Transverse colon (tissue), 4 donors: ENCODE measurements at regions of chr4 and their contacts with region 1.

Region 1: DNA sequence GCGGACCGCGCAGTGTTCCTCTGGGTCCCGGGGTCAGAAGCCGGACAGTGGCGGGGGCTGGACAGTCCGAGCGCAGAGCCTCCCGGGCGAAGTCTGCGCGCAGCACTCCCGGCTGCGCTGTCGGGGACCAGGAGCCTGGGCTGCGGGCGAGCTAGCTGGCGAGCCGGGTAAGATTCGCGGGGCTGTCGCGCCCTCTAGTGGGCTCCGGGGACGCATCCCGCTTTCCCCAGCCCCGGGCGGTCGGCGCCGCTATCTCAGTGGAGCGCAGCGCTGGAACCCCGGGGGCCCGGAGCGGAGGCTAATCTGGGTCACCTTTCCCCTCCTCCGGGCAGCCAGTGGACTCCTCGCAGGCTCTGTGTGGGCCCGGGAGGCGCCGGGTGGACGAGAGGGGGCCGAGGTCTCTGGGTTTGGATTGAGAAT is 4.2 kb downstream of the PDGFRA start:
- DNase-seq: peak; percentile 81
- H3K4me3 ChIP-seq: peak overlapping the region; percentile 19 to 56 (median 37)
- H3K27ac ChIP-seq: peak overlapping the region; percentile 55 to 79 (median 69)
- H3K4me1 ChIP-seq: peaks cover 4 to 48% (median 29%) of the 10 kb centered on the region in 4 donors
- H3K27me3 ChIP-seq: peaks cover 76% of the 10 kb centered on the region
- CTCF ChIP-seq: peak; percentile 63 to 84 (median 72)
- EP300 ChIP-seq: no peak
- POLR2A ChIP-seq: no peak

Region 2: GRCh38 chr4:53196882-53197771 is 1036.2 kb before region 1 on chr4:
- in situ Hi-C with region 1: loop called in 2 of 4 experiments (anchors 10 to 25 kb)
- intact Hi-C with region 1: loop called (anchors 5 kb)
- DNase-seq: no peak
- H3K4me3 ChIP-seq: no peak overlapping the region
- H3K27ac ChIP-seq: no peak overlapping the region
- H3K4me1 ChIP-seq: no peaks in the 10 kb centered on the region
- H3K27me3 ChIP-seq: no peaks in the 10 kb centered on the region
- CTCF ChIP-seq: peak; percentile 67 to 78 (median 74)
- EP300 ChIP-seq: no peak
- POLR2A ChIP-seq: no peak

Region 3: GRCh38 chr4:53365486-53366300 is 867.6 kb before region 1 on chr4 and contains the start of gene SCFD2:
- in situ Hi-C with region 1: loop called in 1 of 4 experiments (anchors 25 kb)
- intact Hi-C with region 1: no loop called
- DNase-seq: peak; percentile 99
- H3K4me3 ChIP-seq: peak within 1 kb of the TSS; percentile 62 to 95 (median 69)
- H3K27ac ChIP-seq: peak within 1 kb of the TSS; percentile 53 to 83 (median 68)
- H3K4me1 ChIP-seq: peaks cover 3 to 38% (median 16%) of the 10 kb centered on the region in 4 donors
- H3K27me3 ChIP-seq: no peaks in the 10 kb centered on the region
- CTCF ChIP-seq: no peak
- EP300 ChIP-seq: no peak
- POLR2A ChIP-seq: no peak
- total RNA-seq, gene SCFD2: 12.7 to 23.7 (median 18.3) TPM

Region 4: DNA sequence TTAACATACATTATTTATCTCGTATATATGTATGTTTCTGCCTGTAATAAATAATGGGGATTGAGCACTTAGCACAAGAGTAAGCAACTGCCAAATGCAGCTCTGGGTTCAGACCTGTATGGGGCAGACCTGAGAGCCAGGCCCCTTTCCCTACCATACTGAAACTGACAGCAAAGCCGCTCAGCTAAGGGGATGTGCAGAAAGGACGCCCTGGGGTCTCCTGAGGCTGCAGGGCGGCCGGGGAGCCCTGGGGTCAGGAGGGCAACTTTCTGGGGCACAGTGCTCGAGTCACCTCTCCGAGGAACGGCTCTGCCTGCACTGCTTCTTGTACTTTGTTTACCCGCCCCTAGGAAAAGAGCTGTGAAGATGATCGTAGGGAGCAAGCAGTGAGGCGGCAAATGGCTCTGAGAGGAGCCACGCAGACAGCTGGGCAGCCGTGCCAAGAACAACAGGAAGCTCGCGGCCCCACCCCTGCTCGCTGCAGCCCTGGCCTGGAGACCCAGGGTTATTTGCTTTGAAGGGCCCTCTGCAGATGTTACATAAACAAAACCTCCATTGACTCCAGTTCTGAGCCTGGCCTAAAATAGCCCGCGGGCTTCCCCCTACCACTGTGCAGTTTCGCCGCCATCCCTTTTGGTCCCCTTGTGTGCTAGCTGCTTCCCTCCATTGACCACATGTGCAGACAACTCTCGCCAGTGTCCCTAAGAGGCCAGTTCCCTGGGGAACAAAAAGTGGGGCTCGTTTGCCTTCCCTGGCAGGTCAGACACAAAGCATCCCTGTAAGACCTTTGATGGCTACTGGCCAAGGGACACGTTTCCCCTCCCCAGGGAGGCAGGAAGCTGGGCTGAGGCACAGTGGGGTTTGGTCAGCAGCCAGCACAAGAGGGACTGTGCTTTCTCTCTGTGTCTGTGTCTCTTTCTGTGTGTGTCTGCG is 530.7 kb before region 1 on chr4:
- in situ Hi-C with region 1: loop called in 1 of 4 experiments (anchors 25 kb)
- intact Hi-C with region 1: no loop called
- DNase-seq: peak; percentile 82
- H3K4me3 ChIP-seq: peak overlapping the region in 2 of 4 donors; percentile 12 to 15
- H3K27ac ChIP-seq: peak overlapping the region; percentile 49 to 67 (median 54)
- H3K4me1 ChIP-seq: peaks cover 5 to 22% (median 14%) of the 10 kb centered on the region in 4 donors
- H3K27me3 ChIP-seq: no peaks in the 10 kb centered on the region
- CTCF ChIP-seq: no peak
- EP300 ChIP-seq: no peak
- POLR2A ChIP-seq: no peak

Region 5: GRCh38 chr4:53908661-53909078 is 324.6 kb before region 1 on chr4:
- in situ Hi-C with region 1: no loop called
- intact Hi-C with region 1: loop called (anchors 5 kb)
- DNase-seq: peak; percentile 15
- H3K4me3 ChIP-seq: peak overlapping the region in 1 of 4 donors; percentile 5
- H3K27ac ChIP-seq: peak overlapping the region; percentile 19 to 62 (median 41)
- H3K4me1 ChIP-seq: peaks cover 0 to 27% (median 15%) of the 10 kb centered on the region in 4 donors
- H3K27me3 ChIP-seq: peaks cover 41% of the 10 kb centered on the region
- CTCF ChIP-seq: peak; percentile 44 to 74 (median 58)
- EP300 ChIP-seq: no peak
- POLR2A ChIP-seq: no peak